ENCODE measurements at regions of chr16 and their contacts with region 1.

Region 1: DNA sequence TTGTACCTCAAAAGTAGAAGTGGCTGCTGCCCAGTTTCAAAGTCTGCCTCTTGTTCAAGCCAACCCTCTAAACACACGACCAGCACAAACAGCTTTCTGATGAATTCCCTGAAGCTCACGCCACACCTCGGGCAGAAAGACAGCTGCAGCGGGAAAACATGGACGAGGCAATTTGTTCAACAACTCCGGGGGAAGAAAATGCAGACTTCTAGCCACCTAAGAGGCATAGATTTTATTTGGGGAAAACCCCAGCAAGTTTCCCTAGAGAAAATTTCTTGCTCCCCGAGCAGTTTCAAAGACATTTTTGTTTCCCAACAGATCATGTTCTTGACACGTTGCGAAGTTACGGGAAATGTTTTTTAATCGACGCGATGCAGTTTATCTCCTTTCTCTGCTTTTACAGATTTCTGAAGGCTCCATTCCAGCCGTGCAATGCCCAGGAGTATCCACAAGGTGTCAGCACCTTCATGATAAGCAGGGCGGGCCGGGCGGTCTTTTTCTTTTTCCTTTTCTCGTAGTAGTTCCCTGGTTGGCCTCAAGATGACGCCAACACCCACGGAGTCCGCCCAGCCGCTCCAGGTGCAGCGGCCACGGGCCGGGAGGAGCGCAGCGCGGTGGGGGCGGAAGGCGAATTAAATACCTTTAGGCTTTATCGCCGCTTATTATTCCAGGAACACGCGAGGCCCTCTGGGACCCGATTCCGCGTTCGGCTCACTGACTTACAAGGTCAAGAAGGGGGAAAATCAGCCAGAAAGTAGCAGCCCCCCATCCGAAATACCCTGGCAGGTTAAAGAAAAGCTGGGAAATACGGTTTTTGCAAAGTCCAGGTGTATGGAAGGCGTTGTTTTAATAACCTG is 2.9 kb upstream of the FOXC2 start:
- DNase-seq: peak; percentile 94
- H3K4me3 ChIP-seq: peak overlapping the region in 1 of 4 donors; percentile 14
- H3K27ac ChIP-seq: no peak overlapping the region
- H3K4me1 ChIP-seq: peaks cover 12 to 45% (median 32%) of the 10 kb centered on the region in 4 donors
- H3K27me3 ChIP-seq: peaks cover 39 to 86% (median 58%) of the 10 kb centered on the region in 3 donors
- CTCF ChIP-seq: peak in 6 of 7 experiments; percentile 85 to 100 (median 100)
- EP300 ChIP-seq: no peak
- POLR2A ChIP-seq: no peak

Region 2: DNA sequence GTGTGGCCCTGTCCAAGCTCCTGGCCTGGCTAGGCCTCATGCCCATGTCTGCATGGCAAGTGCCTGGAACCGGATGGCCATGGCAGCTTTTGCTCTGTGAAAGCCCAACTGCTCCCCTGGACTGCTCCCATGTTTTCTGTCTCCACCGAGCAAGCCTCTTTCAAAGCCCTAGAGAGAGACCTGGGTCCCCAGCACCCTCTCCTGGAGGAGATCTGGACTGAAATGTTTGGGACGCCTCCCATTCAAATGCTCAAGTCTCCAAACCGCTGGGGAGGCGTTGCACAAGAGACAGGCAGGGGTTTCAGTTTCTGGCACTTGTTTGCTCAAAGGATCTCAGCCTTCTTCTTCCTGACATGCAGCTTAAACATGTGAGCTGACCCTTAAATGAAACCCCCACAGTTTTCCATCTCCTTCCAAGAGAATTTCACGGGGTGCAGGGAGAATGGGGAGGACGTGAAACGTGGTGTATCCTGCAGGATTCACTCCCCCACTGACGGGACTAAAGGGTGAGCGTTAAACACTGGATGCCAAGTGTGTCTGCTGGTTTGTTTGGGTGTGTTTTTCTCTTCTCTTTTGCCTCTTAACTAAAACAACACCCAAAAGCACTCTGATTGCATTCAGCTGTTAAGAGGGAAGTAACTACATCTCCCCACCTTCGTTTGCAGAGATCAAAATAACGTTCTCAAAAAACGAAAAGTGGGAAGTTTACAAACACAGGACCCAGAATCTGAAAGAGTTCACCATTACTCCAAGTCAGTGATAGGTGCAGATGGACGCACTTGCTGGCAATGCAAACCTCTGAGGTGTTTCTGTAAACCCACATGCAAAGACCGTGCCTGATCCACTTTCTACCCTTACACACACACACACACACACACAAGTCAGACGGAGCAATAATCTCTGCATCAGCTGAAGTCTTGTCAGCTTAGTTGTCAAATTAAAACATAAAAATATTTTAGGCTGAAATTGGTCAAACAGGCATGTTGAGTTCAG is 496.6 kb after region 1 on chr16:
- intact Hi-C with region 1: loop called (anchors 5 kb)
- DNase-seq: no peak
- H3K4me3 ChIP-seq: peak overlapping the region in 1 of 4 donors; percentile 27
- H3K27ac ChIP-seq: no peak overlapping the region
- H3K4me1 ChIP-seq: peaks cover 0 to 12% (median 0%) of the 10 kb centered on the region in 4 donors
- H3K27me3 ChIP-seq: peaks cover 0 to 67% (median 0%) of the 10 kb centered on the region in 3 donors
- CTCF ChIP-seq: no peak
- EP300 ChIP-seq: no peak
- POLR2A ChIP-seq: no peak

Region 3: GRCh38 chr16:87284183-87284582 is 720.5 kb after region 1 on chr16:
- intact Hi-C with region 1: loop called (anchors 5 kb)
- DNase-seq: no peak
- H3K4me3 ChIP-seq: no peak overlapping the region
- H3K27ac ChIP-seq: no peak overlapping the region
- H3K4me1 ChIP-seq: no peaks in the 10 kb centered on the region
- H3K27me3 ChIP-seq: peaks cover 0 to 10% (median under 1%) of the 10 kb centered on the region in 3 donors
- CTCF ChIP-seq: no peak
- EP300 ChIP-seq: no peak
- POLR2A ChIP-seq: no peak

Measured in stomach (tissue), 19 donors.